ENCODE measurements at regions of chr9 and their contacts with region 1.

Region 1: DNA sequence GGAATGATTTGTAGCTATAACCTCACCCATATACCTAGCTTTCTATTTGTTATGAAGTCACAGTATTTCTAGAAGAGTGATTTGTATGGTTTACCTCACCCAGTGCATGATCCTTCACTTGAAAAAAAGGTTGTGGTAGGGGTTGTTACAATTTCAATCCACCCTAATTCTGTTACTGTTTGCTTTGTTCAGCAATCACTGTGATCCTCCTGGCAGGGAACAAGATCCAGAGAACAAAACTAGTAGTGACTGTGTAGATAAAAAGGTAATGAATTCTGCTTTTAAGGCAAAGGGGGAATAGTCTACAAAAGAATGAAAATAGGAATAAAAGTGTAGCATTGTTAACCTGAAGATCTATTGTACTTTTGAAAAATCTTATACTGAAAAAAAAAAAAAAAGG is 191.3 kb upstream of the SH3GL2 start:
- DNase-seq: no peak
- ATAC-seq: no peak
- H3K4me3 ChIP-seq: no peak overlapping the region
- H3K27ac ChIP-seq: no peak overlapping the region
- H3K4me1 ChIP-seq: peaks cover 2% of the 10 kb centered on the region; the same call in 1 of the 2 replicates
- H3K27me3 ChIP-seq: no peaks in the 10 kb centered on the region
- CTCF ChIP-seq: no peak
- POLR2A ChIP-seq: no peak
- RAD21 ChIP-seq: no peak

Region 2: GRCh38 chr9:17339156-17339555 is 48.4 kb before region 1 on chr9:
- CTCF ChIA-PET with region 1: no interaction called
- POLR2A ChIA-PET with region 1: no interaction called
- dilution Hi-C with region 1: no loop called
- in situ Hi-C with region 1: no loop called
- intact Hi-C with region 1: loop called (anchors 5 kb)
- DNase-seq: no peak
- ATAC-seq: 0 out of 2 replicates have a peak, but pooled peaks have one; percentile 24
- H3K4me3 ChIP-seq: no peak overlapping the region
- H3K27ac ChIP-seq: no peak overlapping the region
- H3K4me1 ChIP-seq: no peaks in the 10 kb centered on the region
- H3K27me3 ChIP-seq: no peaks in the 10 kb centered on the region
- CTCF ChIP-seq: no peak
- POLR2A ChIP-seq: no peak
- RAD21 ChIP-seq: no peak

Measured in IMR-90 (cell line).